Testis (tissue), 5 donors: ENCODE measurements at regions of chr13 and their contacts with region 1.

Region 1: GRCh38 chr13:44470638-44471562 is 97.3 kb downstream of the SERP2 start:
- DNase-seq: no peak
- H3K4me3 ChIP-seq: no peak overlapping the region
- H3K27ac ChIP-seq: no peak overlapping the region
- H3K4me1 ChIP-seq: no peaks in the 10 kb centered on the region
- H3K27me3 ChIP-seq: no peaks in the 10 kb centered on the region
- CTCF ChIP-seq: peak in 1 of 3 experiments; percentile 61
- POLR2A ChIP-seq: no peak

Region 2: GRCh38 chr13:44969551-44970484 is 498.9 kb after region 1 on chr13:
- intact Hi-C with region 1: loop called (anchors 10 kb)
- DNase-seq: no peak
- H3K4me3 ChIP-seq: no peak overlapping the region
- H3K27ac ChIP-seq: no peak overlapping the region
- H3K4me1 ChIP-seq: peaks cover 3% of the 10 kb centered on the region
- H3K27me3 ChIP-seq: no peaks in the 10 kb centered on the region
- CTCF ChIP-seq: peak; percentile 74 to 90 (median 86)
- POLR2A ChIP-seq: no peak